Mucosa of descending colon (tissue), 3 donors: ENCODE measurements at regions of chr2 and their contacts with region 1.

Region 1: DNA sequence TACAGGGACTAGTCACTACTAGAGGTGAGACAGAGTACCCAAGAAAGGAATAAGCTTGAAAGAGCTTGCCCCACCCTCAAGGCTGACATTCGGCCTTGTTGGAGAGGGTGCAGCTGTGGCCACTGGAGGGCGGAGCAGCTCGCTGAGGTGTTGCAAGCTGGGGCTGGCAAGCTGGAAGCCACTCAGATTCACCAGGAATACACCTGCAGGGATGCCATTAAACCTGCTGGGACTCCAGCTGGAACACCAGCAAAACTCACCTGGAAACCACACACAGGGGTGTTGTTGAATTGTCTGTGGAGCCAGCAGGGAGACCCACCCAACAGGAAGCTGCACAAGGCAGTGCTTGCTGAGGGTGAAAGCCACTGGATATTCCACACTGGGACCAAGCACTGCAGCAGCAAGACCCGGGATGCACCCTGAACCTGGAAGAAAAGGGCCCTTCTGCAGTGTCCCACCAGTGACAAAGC is 26.1 kb downstream of the KCTD18 start:
- DNase-seq: peak; percentile 67 to 83 (median 78)
- ATAC-seq: peak; percentile 91
- H3K4me3 ChIP-seq: no peak overlapping the region
- H3K4me1 ChIP-seq: no peaks in the 10 kb centered on the region
- CTCF ChIP-seq: peak; percentile 78

Region 2: GRCh38 chr2:199979832-199980628 is 503.7 kb before region 1 on chr2:
- intact Hi-C with region 1: loop called in 1 of 2 experiments (anchors 5 kb)
- DNase-seq: peak; percentile 68 to 98 (median 87)
- ATAC-seq: peak; percentile 71
- H3K4me3 ChIP-seq: no peak overlapping the region
- H3K4me1 ChIP-seq: peaks cover 15% of the 10 kb centered on the region
- CTCF ChIP-seq: peak; percentile 75

Region 3: DNA sequence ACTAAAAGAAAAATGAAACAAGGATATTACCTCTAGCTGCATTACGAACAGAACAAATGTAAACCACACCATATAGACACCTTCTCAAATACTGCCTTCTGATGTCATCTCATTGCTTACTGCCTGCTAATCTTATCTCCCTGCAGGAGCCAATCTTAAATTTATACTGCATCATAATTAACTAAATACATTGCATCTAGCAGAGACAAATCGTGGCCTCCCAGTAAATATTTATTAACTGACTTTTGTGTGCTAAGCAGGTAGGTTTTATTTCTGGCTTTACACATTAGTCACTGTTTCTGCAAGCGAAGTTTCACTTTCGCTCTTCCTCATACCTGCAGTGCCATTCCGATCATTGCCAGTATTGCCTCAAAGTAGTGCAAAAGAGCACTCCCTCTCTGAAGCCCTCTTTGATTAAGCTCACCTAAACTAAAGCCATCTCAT is 109.8 kb before region 1 on chr2:
- intact Hi-C with region 1: no loop called
- DNase-seq: peak in 1 of 3 donors; percentile 55
- ATAC-seq: peak; percentile 48
- H3K4me3 ChIP-seq: no peak overlapping the region
- H3K4me1 ChIP-seq: peaks cover 44% of the 10 kb centered on the region
- CTCF ChIP-seq: no peak

Region 4: DNA sequence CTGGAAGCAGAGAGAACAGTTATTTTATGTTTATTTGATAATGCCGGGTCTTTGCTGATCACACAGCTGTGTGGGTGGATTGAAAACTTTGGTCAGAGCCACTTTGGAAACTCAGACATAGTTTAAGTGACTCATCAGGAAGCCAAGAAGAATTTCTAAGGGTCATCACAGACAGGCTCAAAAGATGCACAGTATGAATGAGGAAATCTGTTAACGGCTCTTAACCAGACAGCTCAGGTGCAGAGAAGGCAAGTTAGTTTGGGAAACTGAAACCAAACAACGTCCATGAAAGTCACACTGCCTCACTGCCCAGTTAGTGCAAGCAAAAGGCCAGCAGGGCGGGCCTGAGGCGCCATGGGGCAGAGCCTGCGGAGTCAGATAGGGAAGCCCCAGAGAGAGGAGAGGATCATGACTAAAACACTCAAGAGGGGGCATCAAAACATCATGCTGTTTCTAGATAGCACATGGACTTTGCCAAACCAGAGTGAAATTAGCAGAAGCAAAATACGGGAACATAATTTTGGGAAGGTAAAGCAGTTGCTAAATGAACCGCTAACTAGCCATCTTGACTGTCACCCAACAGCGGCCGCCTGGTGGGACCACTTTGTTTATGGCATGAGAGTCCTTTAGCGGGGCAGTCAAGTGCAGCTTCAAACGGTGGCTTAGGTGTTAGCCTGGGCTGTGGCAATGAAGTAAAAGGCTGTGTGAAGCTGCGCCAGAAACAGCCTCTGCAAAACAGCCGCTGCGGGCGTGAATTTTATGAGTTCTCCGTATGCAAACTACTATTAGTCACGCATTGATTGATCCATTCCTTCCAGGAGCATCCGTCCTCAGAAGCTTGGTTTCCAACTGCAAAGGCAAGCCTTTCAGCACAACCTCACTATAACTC is 75.1 kb before region 1 on chr2:
- intact Hi-C with region 1: no loop called
- DNase-seq: peak; percentile 48 to 66 (median 61)
- ATAC-seq: peak; percentile 70
- H3K4me3 ChIP-seq: no peak overlapping the region
- H3K4me1 ChIP-seq: peaks cover 47% of the 10 kb centered on the region
- CTCF ChIP-seq: no peak